Activated CD4-positive, alpha-beta T cell treated with anti-CD3 and anti-CD28 coated beads for 36 hours (primary cell): ENCODE measurements at regions of chr11 and their contacts with region 1.

Region 1: DNA sequence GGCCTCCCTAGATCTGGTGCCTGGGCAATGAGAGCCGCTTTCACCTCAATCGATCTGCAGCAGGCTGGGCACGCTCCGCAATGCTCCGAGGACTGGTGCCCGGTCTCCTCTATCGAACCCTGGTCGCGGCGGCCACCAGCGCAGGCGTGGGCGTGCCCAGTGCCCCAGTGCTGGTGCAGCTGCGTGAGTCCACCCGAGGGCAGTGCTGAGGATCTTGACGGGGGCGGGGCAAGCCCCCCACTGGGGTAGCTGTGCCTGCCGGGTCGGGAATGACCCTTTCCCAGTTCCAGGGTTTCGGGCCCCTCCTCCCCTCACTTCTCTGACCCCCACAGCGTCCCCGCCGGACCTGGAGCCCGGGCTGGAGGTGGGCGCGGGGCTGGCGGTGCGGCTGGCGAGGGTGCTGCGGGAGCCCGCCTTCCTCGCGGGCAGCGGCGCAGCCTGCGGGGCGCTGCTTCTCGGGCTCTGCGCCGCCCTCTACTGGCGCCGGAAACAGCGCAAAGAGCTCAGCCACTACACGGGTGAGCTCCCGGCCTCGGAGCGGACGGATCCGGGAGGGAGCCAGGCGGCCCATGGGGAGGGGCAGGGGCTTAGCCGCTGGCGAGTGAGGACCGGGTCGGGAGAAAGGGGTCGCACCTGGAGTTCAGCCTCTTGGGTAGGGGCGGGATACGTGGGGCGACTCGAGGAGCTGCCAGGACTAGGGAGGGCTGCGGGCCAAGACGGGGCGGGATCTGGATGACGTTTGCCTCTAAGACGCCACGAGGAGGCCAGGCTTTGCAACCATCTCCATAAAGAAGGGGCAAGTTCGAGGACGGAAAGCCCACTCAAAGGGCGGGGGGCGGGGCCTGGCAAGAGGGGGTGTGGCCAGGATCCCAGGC is 10.9 kb downstream of the ROBO3 start:
- DNase-seq: peak; percentile 88
- ATAC-seq: peak; percentile 98
- H3K4me3 Mint-ChIP-seq: peak overlapping the region; percentile 77
- H3K27ac Mint-ChIP-seq: peak overlapping the region; percentile 58
- H3K4me1 Mint-ChIP-seq: peaks cover 16% of the 10 kb centered on the region
- H3K27me3 Mint-ChIP-seq: peaks cover 27% of the 10 kb centered on the region

Region 2: GRCh38 chr11:124622531-124623451 is 253.4 kb before region 1 on chr11 and contains the start of gene TBRG1:
- CTCF ChIA-PET with region 1: no interaction called
- POLR2A ChIA-PET with region 1: interaction called, 3 read pairs
- intact Hi-C with region 1: loop called in 1 of 2 experiments (anchors 1 kb)
- DNase-seq: peak; percentile 87
- ATAC-seq: peak; percentile 99
- H3K4me3 Mint-ChIP-seq: peak within 1 kb of the TSS; percentile 93
- H3K27ac Mint-ChIP-seq: peak within 1 kb of the TSS; percentile 95
- H3K4me1 Mint-ChIP-seq: peaks cover 22% of the 10 kb centered on the region
- H3K27me3 Mint-ChIP-seq: peaks cover 5% of the 10 kb centered on the region
- total RNA-seq, gene TBRG1: 29.6 to 40.6 TPM

Region 3: DNA sequence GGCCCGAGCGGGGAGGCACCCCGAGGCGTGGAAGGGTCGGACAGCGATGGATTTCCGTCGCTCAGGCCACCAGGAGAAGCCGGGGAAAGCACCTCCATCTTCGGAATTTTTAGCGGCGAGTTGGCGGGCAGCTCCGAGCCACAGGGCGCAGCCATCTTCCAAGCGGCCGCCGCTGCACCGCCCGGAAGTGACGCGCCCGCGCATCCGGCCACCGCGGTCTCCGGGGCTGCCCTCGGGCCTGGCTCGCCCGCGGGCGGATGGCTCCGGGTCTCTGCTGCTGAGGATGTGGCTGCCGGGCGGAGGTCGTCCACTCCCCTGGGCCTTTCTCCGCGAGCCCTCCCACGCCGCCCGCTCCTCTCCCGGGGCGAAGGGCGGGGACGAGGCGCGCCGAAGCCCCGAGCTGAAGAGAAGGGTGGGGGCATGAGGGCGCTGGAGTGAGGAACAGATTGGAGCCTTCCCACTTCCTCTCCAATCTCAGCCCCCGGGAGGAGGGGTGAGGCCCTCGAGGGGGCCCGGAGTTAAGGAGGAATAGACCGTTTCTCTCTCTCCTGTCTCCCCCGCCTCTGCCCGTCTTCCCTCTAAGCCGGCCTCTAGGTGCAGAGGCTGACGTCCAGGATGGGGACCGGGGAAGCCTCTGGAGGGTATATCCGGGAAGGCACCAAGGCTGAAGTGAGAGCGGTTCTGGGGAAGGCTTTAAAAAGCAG is 75.8 kb before region 1 on chr11 and contains the start of gene MSANTD2:
- CTCF ChIA-PET with region 1: interaction called, 10 read pairs
- POLR2A ChIA-PET with region 1: no interaction called
- intact Hi-C with region 1: loop called (anchors 1 to 2 kb)
- DNase-seq: peak; percentile 88
- ATAC-seq: peak; percentile 89
- H3K4me3 Mint-ChIP-seq: peak within 1 kb of the TSS; percentile 83
- H3K27ac Mint-ChIP-seq: peak within 1 kb of the TSS; percentile 95
- H3K4me1 Mint-ChIP-seq: peaks cover 36% of the 10 kb centered on the region
- H3K27me3 Mint-ChIP-seq: no peaks in the 10 kb centered on the region
- total RNA-seq, gene MSANTD2: 6.9 to 8.6 TPM

Region 4: DNA sequence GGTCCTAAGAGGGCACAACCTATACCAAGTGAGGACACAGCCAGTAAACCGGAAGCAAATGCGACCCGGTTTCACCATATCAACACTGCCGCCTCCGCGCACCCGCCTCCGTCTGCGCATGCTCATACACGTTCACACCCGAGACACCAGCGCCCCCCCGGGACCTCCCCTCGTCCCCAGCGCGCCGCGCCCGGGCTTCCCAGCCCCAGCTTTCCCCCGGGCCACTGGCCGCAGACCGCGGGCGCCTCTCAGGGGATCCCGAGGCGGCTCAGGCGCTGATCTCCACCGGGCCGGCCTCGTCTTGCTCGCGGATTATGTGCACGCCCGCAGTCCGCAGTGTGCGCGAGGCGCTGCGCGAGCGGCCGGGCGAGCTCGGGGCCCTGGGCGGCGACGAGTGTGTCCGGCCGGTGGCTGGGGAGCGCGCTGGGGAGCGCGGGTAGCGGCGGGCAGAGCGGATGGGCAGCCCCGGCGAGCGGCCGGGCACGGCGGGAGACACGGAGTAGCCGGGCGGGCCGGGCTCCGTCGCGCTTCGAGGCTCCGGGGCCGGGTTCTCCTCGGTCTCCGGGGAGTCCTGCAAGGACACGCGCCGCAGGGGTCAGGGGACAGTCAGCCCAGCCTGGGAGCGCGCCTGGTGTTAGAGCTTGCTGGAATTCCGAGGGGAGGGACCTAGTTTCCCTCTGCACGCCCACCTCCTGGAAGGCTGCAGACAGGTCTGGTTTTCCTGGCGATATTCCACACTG is 44.9 kb after region 1 on chr11:
- CTCF ChIA-PET with region 1: interaction called, 4 read pairs
- POLR2A ChIA-PET with region 1: no interaction called
- intact Hi-C with region 1: loop called in 1 of 2 experiments (anchors 2 kb)
- DNase-seq: peak; percentile 88
- ATAC-seq: peak; percentile 87
- H3K4me3 Mint-ChIP-seq: no peak overlapping the region
- H3K27ac Mint-ChIP-seq: no peak overlapping the region
- H3K4me1 Mint-ChIP-seq: peaks cover 20% of the 10 kb centered on the region
- H3K27me3 Mint-ChIP-seq: no peaks in the 10 kb centered on the region

Region 5: DNA sequence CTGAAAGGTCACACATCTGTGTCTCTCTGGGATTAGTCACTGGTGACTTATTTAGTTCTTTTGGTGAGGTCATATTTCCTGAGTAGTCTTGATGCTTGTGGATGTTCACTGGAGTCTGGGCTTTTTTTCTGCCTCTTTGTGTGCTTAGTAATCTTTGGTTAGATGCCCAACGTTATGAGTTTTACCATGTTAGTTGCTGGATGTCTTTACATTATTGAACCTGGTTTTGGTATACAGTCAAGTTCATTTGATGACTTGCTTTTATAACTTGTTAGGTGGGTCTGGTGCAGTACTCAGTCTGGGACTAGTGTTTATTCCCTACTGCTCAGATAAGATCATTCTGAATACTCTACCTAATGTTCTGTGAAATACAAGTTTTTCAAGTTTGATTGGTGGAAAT is 160.8 kb after region 1 on chr11:
- CTCF ChIA-PET with region 1: no interaction called
- POLR2A ChIA-PET with region 1: no interaction called
- intact Hi-C with region 1: no loop called
- DNase-seq: no peak
- ATAC-seq: peak; percentile 85
- H3K4me3 Mint-ChIP-seq: no peak overlapping the region
- H3K27ac Mint-ChIP-seq: no peak overlapping the region
- H3K4me1 Mint-ChIP-seq: peaks cover 4% of the 10 kb centered on the region
- H3K27me3 Mint-ChIP-seq: no peaks in the 10 kb centered on the region